CD14-positive monocyte (primary cell): ENCODE measurements at regions of chr2 and their contacts with region 1.

Region 1: DNA sequence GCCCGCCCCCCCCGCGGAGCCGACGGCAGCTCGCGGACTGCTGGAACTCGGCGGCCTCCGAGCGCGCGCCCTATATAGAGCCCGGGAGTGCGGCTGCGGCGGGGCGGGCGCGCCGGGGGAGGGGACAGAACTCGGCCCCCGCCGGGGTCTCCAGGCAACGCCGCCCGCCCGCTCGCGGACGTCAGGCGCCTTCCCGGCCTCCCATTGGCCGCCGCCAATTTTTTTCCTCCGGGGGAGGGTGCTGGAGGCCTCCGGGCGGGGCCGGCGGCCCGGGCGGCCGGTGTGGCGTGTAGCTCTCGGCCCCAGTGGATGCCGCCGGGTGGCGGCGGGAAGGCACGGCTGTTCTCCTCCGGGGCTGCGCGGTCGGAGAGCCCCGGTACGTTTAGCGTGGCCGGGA is at the start of gene ZFP36L2:
- DNase-seq: peak; percentile 91 to 93 (median 92)
- H3K4me3 ChIP-seq: peak within 1 kb of the TSS; percentile 83 to 99 (median 87)
- H3K4me3 Mint-ChIP-seq: peak within 1 kb of the TSS; percentile 93 to 100
- H3K27ac ChIP-seq: peak within 1 kb of the TSS; percentile 92 to 95
- H3K27ac Mint-ChIP-seq: peak within 1 kb of the TSS; percentile 95 to 98 (median 96)
- H3K4me1 ChIP-seq: peaks cover 33 to 62% of the 10 kb centered on the region in 2 donors
- H3K4me1 Mint-ChIP-seq: peaks cover 45% of the 10 kb centered on the region
- H3K27me3 ChIP-seq: no peaks in the 10 kb centered on the region
- H3K27me3 Mint-ChIP-seq: peaks cover 0 to 4% (median 0%) of the 10 kb centered on the region in 3 donors
- CTCF ChIP-seq: no peak
- polyA plus RNA-seq, gene ZFP36L2: 84.4 to 150 (median 88.3) TPM

Region 2: GRCh38 chr2:42944779-42945415 is 281.7 kb before region 1 on chr2:
- intact Hi-C with region 1: loop called in 1 of 2 experiments (anchors 2 kb)
- DNase-seq: no peak
- H3K4me3 ChIP-seq: no peak overlapping the region
- H3K4me3 Mint-ChIP-seq: no peak overlapping the region
- H3K27ac ChIP-seq: no peak overlapping the region
- H3K27ac Mint-ChIP-seq: peak overlapping the region in 1 of 7 donors; percentile 35
- H3K4me1 ChIP-seq: peaks cover 22 to 30% of the 10 kb centered on the region in 2 donors
- H3K4me1 Mint-ChIP-seq: peaks cover 38% of the 10 kb centered on the region
- H3K27me3 ChIP-seq: no peaks in the 10 kb centered on the region
- H3K27me3 Mint-ChIP-seq: peaks cover 0 to 3% (median 1%) of the 10 kb centered on the region in 3 donors
- CTCF ChIP-seq: no peak

Region 3: GRCh38 chr2:43105586-43106558 is 120.7 kb before region 1 on chr2:
- intact Hi-C with region 1: loop called (anchors 5 kb)
- DNase-seq: peak; percentile 72 to 84 (median 84)
- H3K4me3 ChIP-seq: peak overlapping the region in 1 of 3 experiments; percentile 58
- H3K4me3 Mint-ChIP-seq: peak overlapping the region; percentile 50 to 67
- H3K27ac ChIP-seq: peak overlapping the region; percentile 84 to 89
- H3K27ac Mint-ChIP-seq: peak overlapping the region; percentile 93 to 99 (median 98)
- H3K4me1 ChIP-seq: peaks cover 89 to 95% of the 10 kb centered on the region in 2 donors
- H3K4me1 Mint-ChIP-seq: peaks cover 88% of the 10 kb centered on the region
- H3K27me3 ChIP-seq: no peaks in the 10 kb centered on the region
- H3K27me3 Mint-ChIP-seq: peaks cover 0 to 5% (median 0%) of the 10 kb centered on the region in 3 donors
- CTCF ChIP-seq: peak; percentile 67

Region 4: GRCh38 chr2:43158259-43158880 is 68.2 kb before region 1 on chr2:
- intact Hi-C with region 1: loop called (anchors 5 kb)
- DNase-seq: peak; percentile 73 to 85 (median 77)
- H3K4me3 ChIP-seq: peak overlapping the region in 1 of 3 experiments; percentile 57
- H3K4me3 Mint-ChIP-seq: peak overlapping the region; percentile 65 to 83
- H3K27ac ChIP-seq: peak overlapping the region; percentile 90 to 93
- H3K27ac Mint-ChIP-seq: peak overlapping the region; percentile 97 to 100 (median 99)
- H3K4me1 ChIP-seq: peaks cover 61 to 65% of the 10 kb centered on the region in 2 donors
- H3K4me1 Mint-ChIP-seq: peaks cover 62% of the 10 kb centered on the region
- H3K27me3 ChIP-seq: no peaks in the 10 kb centered on the region
- H3K27me3 Mint-ChIP-seq: peaks cover 0 to 8% (median 3%) of the 10 kb centered on the region in 3 donors
- CTCF ChIP-seq: no peak

Region 5: DNA sequence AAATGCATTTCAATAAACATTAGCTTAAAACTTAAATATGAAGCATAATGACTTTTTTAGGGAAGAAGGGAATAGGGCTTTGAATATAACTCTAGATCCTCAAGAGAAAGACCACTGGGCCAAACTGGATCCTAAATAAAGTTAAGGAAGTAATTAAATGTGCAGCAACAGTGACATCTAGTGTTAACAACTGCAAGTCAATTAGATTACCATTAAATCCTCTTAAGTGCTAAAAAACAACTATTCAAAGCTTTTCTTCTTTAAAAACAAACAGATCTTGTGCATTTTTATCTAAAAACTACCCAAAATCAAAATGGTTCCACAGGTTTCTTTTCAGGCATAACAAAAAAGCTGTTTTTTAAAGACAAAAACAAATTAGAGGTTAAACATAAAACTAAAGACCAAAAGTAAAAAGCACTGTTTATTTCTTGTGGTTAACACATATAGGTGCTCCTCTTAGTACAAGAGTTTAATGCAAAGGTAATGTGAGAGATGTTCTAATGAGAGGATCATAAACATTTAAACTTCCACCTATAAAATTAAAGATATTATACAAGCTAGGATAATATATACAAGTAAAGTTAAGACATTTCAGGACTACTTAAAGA is 257.9 kb after region 1 on chr2:
- intact Hi-C with region 1: loop called (anchors 5 kb)
- DNase-seq: peak; percentile 65 to 78 (median 77)
- H3K4me3 ChIP-seq: no peak overlapping the region
- H3K4me3 Mint-ChIP-seq: no peak overlapping the region
- H3K27ac ChIP-seq: peak overlapping the region in 1 of 2 donors; percentile 60
- H3K27ac Mint-ChIP-seq: peak overlapping the region in 5 of 7 donors; percentile 45 to 80 (median 59)
- H3K4me1 ChIP-seq: peaks cover 21 to 29% of the 10 kb centered on the region in 2 donors
- H3K4me1 Mint-ChIP-seq: peaks cover 49% of the 10 kb centered on the region
- H3K27me3 ChIP-seq: no peaks in the 10 kb centered on the region
- H3K27me3 Mint-ChIP-seq: no peaks in the 10 kb centered on the region
- CTCF ChIP-seq: peak; percentile 87